ENCODE measurements at regions of chr12 and their contacts with region 1.

Region 1: GRCh38 chr12:6470375-6471163 is at the start of gene VAMP1:
- DNase-seq: peak; percentile 87
- H3K4me3 ChIP-seq: peak within 1 kb of the TSS; percentile 88
- CTCF ChIP-seq: no peak

Region 2: DNA sequence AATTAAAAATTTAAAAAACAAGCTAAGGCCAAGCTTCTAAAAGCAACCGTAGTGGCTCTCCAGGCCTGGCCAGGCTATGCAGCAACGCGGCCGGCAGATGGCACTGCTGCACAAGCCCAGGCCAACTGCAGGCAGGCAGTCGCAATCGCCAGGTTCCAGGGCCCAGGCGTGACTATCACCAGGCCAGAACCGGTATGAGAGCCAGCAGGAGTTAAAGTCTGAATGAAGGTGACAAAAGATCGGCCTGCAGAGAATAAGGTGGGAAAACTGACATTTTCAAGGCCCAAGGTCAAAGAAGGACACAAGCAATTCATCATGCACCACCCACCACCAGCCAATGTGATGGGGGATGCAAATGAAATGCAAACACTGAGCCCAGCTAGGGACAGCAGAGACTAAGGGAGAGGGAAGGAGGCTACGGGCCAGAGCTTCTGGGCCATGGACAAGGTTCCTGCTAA is 481.9 kb before region 1 on chr12:
- CTCF ChIA-PET with region 1: interaction called, 12 read pairs
- POLR2A ChIA-PET with region 1: no interaction called
- DNase-seq: peak; percentile 5
- H3K4me3 ChIP-seq: no peak overlapping the region
- CTCF ChIP-seq: peak; percentile 98

Region 3: DNA sequence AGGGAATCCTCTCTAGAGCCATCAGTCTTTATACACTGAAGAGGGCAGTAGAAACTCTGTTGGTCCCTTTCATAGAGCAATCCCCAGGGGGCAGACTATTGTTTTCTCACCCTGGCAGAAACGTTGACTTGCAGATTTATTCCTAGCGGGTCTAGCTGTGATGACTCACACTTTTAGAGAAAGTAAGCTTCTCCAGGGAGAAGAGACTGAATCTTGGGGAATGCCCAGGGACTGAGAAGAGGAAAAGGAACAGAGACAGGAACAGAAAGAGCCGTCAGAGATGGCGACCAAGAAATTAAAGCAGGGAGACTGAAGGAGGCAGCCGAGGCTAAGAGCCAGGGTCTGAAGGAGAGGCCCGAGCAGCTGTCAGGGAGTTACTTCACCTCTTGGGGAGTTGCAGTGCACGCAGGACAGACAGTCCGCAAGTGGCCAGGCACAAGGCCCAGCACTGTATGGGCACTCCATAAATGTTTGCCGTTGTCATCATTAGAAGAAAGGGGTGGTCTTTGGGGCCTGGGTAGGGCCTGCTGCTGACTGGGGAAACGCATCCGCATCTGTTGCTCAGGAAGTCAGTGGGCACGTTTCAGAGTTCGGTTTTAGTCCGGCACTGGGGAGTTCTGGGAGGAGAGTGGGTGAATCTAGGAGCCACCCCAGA is 147.1 kb before region 1 on chr12:
- CTCF ChIA-PET with region 1: interaction called, 17 read pairs
- POLR2A ChIA-PET with region 1: interaction called, 4 read pairs
- DNase-seq: peak; percentile 76
- H3K4me3 ChIP-seq: 0 out of 2 replicates have a peak overlapping the region, but pooled peaks have one; percentile 8
- CTCF ChIP-seq: peak; percentile 46

Region 4: GRCh38 chr12:6335451-6336078 is 135.0 kb before region 1 on chr12:
- CTCF ChIA-PET with region 1: interaction called, 43 read pairs
- POLR2A ChIA-PET with region 1: interaction called, 10 read pairs
- DNase-seq: no peak
- H3K4me3 ChIP-seq: peak overlapping the region; percentile 54
- CTCF ChIP-seq: peak; percentile 86

Region 5: DNA sequence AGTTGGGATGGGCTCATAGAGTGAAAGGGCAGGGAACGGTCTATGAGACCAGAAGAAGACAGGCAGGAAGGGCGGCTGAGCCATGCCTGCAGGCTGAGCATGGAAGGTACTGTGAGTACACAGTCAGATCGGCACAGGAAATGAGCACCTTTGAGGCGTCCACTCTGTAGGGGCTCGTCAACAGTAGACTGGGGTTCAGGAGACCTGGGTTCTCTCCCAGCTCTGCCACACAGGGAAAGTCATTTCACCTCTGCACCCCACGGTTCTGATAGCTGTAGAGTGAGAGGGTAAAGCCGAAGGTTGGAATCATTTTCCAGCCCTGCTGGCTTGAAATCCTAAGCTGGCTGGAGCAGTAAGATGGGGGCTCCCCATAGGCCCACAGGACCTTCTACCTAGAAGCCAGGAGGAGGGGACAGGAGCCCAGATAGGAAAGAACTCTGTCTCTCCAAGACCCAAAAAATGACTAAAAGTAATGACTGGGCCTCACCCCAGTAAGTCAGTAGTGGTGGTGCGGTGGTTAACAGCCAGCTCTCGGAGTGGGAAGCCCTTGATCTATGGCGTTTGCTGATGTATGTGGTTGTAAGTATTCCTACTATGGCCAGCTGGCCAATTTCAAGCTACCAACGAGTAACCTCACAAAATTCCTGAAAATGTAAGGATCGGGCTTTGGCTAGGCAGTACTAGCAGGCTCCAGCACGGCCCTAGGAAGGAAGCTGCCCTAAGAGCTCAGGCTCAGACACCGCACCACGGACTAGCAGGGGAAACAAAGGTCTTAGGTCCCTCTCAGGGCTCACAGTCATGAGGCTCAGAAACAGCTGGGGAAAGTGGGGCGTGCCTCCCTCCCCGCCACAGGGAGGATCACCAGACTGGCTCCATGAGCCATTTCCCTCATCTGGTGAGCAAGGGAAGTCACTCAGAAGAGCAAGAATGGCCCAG is 36.1 kb before region 1 on chr12:
- CTCF ChIA-PET with region 1: interaction called, 199 read pairs
- POLR2A ChIA-PET with region 1: interaction called, 5 read pairs
- DNase-seq: no peak
- H3K4me3 ChIP-seq: no peak overlapping the region
- CTCF ChIP-seq: no peak

Region 6: DNA sequence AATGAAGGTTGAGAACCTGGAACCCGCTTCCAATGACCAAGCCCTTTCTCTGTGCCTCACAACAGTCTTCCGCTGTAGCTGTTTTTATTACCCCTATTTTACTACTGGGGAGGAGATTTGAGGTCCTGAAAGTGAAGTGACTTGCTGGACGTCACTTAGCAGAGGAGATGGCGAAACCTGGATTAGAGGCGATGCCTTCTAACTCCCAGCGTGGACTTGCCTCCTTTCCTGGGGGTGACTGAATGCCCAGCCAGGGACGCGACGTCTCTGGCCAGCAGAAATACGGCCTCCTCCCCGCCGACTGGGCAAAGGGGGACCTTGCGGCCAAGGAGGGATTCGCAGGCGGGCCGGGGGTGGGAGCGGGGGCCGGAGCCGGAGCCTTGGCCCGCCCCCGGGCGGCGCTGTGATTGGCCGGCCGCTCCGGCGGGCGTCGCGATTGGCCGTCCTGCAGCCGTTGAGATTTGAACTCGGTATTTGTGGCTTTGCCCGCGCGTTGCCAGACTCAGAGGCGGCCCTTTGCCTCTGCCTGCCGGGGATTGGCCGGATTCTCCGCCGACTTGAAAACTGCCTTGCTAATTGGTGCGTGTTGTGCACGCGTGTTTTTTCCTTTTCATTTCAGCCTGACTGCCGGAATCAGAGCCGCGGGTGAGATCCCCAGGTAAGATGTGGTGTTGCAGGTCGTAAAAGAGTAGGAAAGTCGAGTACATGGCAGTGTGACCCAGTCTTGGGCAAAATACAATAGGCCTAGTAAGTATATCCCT is 23.1 kb after region 1 on chr12 and contains the start of gene NCAPD2:
- CTCF ChIA-PET with region 1: interaction called, 14 read pairs
- POLR2A ChIA-PET with region 1: interaction called, 17 read pairs
- DNase-seq: peak; percentile 55
- H3K4me3 ChIP-seq: peak within 1 kb of the TSS; percentile 97
- CTCF ChIP-seq: peak; percentile 24

Region 7: DNA sequence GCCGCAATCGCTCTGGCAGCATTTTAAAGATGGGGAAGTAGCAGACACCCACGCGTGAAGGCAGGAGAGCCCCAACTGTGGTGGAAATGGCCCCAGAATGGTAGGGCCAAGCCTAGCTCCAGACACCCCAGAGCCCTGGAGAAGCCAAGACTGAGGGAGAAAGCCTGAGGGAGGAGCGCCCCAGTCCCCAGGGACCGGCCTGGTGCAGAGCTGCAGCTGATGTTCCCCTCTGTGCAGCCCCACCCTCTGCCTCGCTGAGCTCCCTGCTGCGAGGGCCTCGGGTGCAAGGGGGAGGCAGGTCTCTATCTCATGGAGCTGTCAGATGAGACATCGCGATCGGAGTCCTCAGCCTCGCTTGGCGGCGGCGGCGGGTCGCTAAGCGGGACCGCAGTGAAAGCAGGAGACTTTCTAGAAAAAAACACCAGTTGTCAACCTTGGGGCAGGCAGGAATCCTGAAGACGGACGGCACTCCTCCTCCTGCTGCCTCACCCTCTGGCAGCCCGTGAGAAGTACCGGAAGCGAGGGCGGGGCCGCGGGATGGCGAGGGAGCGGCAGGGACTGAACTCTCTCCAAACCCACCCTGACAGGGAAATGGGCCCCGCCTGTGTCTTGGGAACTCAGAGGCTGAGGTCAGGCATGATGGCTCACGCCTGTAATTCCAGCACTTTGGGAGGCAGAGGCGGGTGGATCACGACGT is 69.8 kb after region 1 on chr12:
- CTCF ChIA-PET with region 1: interaction called, 14 read pairs
- POLR2A ChIA-PET with region 1: interaction called, 33 read pairs
- DNase-seq: no peak
- H3K4me3 ChIP-seq: peak overlapping the region; percentile 10; the same call in 1 of the 2 replicates
- CTCF ChIP-seq: peak; percentile 7

Measured in AG04449 (cell line).